ENCODE measurements at regions of chr12 and their contacts with region 1.

Region 1: DNA sequence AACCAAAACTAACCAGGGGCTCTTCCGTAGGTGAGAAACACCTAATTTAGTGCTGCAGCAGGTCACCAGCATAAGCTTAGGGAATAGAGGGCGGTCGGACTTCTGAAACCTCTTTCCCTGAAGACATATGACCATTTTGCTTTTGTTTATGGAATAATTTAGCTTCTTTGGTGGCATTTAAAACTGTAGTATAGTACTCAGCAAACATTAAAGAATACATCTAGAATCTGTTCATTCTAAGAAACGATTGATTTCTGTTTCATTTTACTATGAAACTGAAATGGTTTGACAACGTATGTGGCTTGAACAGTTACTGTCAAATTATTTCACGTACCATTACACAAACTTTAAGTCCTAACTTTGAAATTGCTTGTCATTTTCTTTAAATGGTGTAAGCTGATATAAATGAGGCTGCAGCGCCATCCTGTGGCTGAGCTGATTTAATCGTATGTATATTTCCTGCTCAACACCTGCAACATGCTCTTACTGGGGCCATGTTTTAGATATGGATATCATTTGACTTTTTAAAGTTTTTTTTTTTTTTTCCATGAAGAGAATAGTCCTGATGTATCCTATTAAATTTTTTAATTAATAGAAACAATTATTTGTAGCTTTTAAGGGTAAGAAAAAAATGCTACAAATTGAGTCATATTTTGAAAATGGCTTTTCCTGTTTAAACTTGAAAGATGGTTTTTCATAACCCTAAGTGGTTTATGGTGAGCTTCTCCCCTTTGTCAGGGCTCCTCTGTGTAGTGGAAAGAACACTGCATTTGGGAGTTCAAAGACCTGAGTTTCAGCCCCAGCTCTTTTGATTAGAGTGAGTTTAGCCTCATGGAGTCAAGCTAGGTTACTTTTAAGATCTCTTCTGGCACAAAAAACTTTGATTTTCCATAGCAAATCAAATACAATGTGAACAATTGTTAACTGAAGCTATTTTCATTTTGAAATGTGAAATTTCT is 27.4 kb downstream of the CFAP54 start:
- DNase-seq: peak; percentile 81
- ATAC-seq: peak; percentile 87
- H3K4me3 Mint-ChIP-seq: peak overlapping the region; percentile 51
- H3K27ac Mint-ChIP-seq: peak overlapping the region; percentile 70
- H3K4me1 Mint-ChIP-seq: peaks cover 18% of the 10 kb centered on the region
- H3K27me3 Mint-ChIP-seq: peaks cover 4% of the 10 kb centered on the region

Region 2: GRCh38 chr12:96215919-96216273 is 300.9 kb before region 1 on chr12:
- POLR2A ChIA-PET with region 1: interaction called, 17 read pairs
- DNase-seq: no peak
- ATAC-seq: no peak
- H3K4me3 Mint-ChIP-seq: peak overlapping the region; percentile 18
- H3K27ac Mint-ChIP-seq: no peak overlapping the region
- H3K4me1 Mint-ChIP-seq: peaks cover 33% of the 10 kb centered on the region
- H3K27me3 Mint-ChIP-seq: no peaks in the 10 kb centered on the region

Region 3: GRCh38 chr12:96483116-96483515 is 33.6 kb before region 1 on chr12:
- POLR2A ChIA-PET with region 1: no interaction called
- DNase-seq: no peak
- ATAC-seq: no peak
- H3K4me3 Mint-ChIP-seq: no peak overlapping the region
- H3K27ac Mint-ChIP-seq: no peak overlapping the region
- H3K4me1 Mint-ChIP-seq: peaks cover 15% of the 10 kb centered on the region
- H3K27me3 Mint-ChIP-seq: peaks cover 7% of the 10 kb centered on the region